ENCODE measurements at regions of chr7 and their contacts with region 1.

Region 1: DNA sequence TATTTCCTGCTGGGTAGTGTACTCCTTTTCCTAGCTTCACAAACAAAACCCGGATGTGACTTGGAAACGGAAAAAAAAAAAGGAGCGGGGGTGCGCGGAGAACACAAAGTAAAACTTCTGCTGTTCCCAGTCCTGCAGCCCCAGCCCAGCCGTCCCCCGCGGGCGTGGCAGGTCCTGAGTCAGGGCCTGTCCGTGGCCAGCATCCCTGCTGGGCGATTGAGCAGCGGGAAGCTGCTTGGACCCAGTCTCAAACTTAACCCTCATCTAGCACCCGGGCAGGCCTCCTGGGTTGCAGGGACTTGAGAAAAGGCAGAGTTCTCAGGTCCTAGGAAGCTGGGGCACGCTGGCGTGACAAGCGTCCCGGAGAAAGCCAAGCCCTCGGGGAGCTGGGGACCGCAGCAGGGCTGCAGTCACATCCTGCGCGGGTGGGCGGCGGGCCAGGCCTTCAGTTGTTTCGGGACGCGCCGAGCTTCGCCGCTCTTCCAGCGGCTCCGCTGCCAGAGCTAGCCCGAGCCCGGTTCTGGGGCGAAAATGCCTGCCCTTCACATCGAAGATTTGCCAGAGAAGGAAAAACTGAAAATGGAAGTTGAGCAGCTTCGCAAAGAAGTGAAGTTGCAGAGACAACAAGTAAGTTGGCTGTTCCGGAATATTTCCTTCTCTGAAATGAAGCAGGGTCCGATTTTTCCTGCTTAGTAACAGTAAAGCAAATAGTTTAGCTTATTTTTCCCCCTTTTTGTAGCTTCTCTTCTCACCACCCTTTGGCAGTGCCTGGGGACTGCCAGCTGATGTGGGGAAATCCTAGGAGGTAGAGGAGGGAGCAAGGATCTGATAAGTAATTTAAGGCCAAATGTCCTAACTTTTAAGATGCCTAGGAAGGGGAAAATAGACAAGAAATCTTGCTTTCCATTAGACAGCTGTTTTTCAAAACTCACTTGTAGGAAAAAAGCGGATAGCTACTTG is at the start of gene GNG11:
- ATAC-seq: peak; percentile 91 to 99 (median 96)
- H3K4me3 ChIP-seq: peak within 1 kb of the TSS; percentile 24 to 43 (median 29)
- H3K27ac ChIP-seq: no peak within 1 kb of the TSS
- H3K4me1 ChIP-seq: no peaks in the 10 kb centered on the region
- total RNA-seq, gene GNG11: 0.35 to 17.4 (median 1.4) TPM

Region 2: DNA sequence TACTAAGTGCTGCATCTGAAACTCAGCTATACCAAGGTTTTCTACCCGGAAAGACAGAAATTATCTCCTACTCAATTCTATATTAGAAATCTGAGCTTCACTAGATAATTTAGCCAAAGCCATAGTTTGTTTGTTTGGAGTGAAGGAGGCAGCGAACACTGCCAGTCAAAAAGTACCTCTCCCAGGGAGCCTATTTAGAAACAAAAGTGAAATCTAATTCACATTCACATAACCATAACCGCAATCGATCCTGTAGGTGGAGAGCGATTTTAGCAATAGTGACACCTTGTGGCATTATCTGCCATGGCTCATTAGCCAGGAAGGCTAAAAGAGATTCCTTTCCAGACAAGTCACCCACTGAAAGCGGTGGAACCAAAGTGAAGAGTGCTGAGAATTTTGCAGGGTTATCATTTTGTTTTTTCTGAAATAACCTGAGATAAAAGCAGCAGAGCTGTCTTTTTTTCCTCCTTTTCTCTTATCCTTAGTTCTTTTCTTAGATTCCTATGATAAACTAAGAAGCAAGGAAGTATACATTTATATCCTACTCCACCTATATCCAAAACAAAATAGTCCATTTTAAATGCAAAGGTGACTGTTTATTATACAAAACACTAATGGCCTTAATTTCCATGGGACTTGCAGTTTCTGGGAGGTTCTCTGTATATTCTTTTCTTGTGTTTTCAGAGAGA is 165.9 kb after region 1 on chr7:
- in situ Hi-C with region 1: loop called in 3 of 9 experiments (anchors 25 kb)
- ATAC-seq: peak; percentile 48 to 97 (median 78)
- H3K4me3 ChIP-seq: no peak overlapping the region
- H3K27ac ChIP-seq: no peak overlapping the region
- H3K4me1 ChIP-seq: no peaks in the 10 kb centered on the region

Region 3: DNA sequence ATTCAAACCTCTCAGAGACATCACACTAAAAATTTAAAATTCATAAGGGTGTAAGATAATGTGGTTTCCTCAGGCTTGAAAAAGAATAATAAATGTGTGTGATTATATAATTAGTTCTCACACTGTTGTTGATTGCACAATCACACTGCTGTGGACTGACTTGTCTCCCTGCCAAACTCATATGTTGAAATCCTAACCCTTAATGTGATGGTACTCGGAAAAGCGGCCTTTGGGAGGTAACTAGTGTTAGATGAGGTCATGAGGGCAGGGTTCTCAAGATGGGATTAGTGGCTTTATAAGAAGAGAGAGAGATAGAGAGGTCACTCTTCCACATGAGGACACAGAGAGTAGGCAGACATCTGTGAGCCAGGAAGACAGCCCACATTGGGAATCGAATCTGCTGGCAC is 344.4 kb after region 1 on chr7:
- in situ Hi-C with region 1: loop called in 1 of 9 experiments (anchors 25 kb)
- ATAC-seq: peak in 3 of 8 experiments; percentile 73 to 94 (median 93)
- H3K4me3 ChIP-seq: no peak overlapping the region
- H3K27ac ChIP-seq: no peak overlapping the region
- H3K4me1 ChIP-seq: peaks cover 0 to 4% of the 10 kb centered on the region in 2 donors